ENCODE measurements at regions of chr21 and their contacts with region 1.

Region 1: GRCh38 chr21:16534408-16535101 is 804.8 kb downstream of the USP25 start:
- DNase-seq: peak; percentile 82
- ATAC-seq: peak; percentile 77

Region 2: DNA sequence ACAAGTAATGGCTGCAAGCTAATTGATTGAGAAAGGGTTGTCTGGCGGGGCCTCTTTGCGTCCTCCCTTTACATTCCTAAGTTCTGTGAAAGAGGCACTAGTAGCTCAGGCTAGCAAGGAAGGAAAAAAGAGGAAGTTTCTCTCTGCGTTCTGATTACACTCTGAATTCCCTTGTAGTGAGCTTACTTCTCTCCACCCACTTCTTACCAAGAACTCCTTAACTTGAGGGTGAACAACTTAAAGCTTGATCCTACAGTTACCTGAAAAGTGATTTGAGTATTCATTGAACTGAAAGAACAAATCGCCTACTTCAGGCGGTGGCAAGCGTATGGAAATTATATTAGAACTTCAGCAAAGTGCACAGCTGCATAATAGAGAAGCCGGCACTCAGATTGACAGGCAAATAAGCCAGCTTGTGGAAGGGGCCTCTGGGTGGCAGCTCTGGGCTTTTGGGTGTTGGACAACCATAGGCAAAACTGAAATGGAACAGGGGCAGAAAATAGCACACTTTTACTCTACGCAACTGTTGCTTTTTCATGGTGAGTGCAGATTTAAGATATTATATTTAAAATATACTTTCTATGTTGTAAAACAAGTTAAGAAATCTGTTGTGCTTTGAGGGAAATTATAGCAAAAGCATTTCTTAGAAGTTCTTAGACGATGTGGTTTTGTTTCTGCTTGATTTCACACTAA is 340.3 kb before region 1 on chr21:
- intact Hi-C with region 1: loop called (anchors 10 kb)
- DNase-seq: peak; percentile 73
- ATAC-seq: peak; percentile 92

Region 3: GRCh38 chr21:16330082-16330907 is 204.3 kb before region 1 on chr21:
- intact Hi-C with region 1: loop called (anchors 10 kb)
- DNase-seq: no peak
- ATAC-seq: peak; percentile 98

Region 4: GRCh38 chr21:16419188-16419921 is 115.2 kb before region 1 on chr21:
- intact Hi-C with region 1: loop called (anchors 1 kb)
- DNase-seq: peak; percentile 79
- ATAC-seq: peak; percentile 96

Region 5: GRCh38 chr21:16476056-16476825 is 58.3 kb before region 1 on chr21:
- intact Hi-C with region 1: loop called (anchors 5 kb)
- DNase-seq: no peak
- ATAC-seq: peak; percentile 30

Region 6: DNA sequence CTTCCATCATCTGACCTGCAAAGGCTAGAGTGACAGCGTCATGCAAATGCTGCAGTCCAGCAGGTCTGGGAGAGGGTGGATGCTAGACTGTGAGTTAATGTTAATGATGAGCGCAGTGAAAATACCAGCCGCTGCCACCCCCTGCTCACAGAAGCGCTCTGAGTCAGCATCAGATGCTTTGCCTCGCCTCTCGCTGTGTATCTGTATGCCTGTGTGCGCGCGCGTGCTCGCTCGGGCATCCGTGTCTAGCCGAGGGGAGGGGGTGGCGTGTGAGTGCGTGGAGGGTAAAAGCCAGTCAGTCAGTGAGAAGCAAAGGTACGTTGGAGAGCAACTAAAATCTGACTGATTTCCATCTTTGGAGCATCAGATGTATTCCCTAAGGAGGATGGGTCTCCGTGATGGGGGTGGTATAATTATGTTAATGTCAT is 53.9 kb after region 1 on chr21:
- intact Hi-C with region 1: loop called (anchors 5 kb)
- DNase-seq: peak; percentile 74
- ATAC-seq: peak; percentile 79

Measured in Right ventricle myocardium inferior (tissue), 1 donor.